HEK293T (cell line): ENCODE measurements at regions of chr22 and their contacts with region 1.

Region 1: DNA sequence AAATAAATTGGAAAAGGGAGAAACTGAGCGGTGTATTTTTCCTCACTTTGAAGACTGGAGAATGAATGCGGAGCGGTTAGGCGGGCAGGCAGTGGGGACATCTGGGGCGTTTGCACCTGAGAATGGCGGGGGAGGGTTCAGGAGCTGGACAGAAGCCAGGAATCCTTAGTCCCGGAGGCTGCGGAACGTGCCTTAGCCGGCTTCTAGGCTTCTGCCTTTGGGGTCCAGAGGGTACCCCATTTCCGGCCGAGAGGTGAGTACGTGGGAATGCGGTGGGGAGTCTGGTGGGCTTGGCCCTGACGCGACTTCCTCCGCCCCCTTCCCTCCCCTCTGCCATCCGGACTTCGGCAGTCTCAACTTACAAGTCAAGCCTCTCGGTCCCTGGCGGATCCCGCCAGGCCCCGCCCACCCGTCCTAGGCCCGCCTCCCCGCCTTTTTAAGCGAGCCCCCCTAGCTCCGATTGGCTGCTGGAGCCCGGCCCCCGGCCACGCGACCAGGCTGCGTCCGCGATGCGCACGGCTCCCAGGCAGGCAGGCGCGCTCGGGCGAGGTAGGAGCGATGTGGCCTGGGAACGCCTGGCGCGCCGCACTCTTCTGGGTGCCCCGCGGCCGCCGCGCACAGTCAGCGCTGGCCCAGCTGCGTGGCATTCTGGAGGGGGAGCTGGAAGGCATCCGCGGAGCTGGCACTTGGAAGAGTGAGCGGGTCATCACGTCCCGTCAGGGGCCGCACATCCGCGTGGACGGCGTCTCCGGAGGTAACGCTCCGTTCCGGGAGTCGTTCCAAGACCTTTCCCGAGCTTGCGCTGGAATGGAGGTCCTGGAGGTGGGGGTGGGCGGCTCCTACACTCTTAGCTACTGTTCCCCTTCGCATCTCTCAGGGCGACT is at the start of gene GCAT:
- DNase-seq: peak; percentile 99

Region 2: DNA sequence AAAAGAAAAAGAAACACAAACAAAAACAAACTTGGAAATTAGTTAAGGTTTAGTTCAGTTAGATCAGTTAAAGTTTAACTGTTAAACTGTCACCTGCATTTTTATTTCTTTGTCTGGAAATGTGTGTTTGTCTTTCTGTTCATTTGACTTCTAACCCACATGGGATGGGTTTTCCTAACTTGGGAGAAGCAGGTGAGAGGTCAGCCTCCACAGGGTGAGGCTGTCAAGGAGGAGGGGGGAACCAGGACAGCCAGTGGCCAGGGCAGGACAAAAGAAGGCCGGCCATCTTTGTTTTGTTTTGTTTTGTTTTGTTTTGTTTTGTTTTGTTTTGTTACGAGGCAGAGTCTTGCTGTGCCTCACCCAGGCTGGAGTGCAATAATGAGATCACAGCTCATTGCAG is 13.3 kb before region 1 on chr22:
- CTCF ChIA-PET with region 1: interaction called, 5 read pairs
- POLR2A ChIA-PET with region 1: interaction called, 10 read pairs
- DNase-seq: no peak

Region 3: DNA sequence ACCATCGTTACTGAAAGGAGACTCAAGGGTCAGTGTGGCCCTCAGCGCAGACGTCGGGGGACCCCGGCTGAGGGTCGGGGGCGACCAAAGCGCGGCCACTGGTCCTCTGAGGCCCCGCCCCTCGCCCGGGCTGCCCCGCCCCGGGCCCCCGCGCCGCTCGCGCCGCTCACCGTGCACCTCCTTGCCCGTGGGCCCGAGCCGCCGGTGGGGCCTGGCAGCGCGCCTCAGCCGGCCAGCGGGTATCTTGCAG is 36.0 kb after region 1 on chr22:
- CTCF ChIA-PET with region 1: no interaction called
- POLR2A ChIA-PET with region 1: interaction called, 20 read pairs
- DNase-seq: peak; percentile 67